ENCODE measurements at regions of chr10 and their contacts with region 1.

Region 1: DNA sequence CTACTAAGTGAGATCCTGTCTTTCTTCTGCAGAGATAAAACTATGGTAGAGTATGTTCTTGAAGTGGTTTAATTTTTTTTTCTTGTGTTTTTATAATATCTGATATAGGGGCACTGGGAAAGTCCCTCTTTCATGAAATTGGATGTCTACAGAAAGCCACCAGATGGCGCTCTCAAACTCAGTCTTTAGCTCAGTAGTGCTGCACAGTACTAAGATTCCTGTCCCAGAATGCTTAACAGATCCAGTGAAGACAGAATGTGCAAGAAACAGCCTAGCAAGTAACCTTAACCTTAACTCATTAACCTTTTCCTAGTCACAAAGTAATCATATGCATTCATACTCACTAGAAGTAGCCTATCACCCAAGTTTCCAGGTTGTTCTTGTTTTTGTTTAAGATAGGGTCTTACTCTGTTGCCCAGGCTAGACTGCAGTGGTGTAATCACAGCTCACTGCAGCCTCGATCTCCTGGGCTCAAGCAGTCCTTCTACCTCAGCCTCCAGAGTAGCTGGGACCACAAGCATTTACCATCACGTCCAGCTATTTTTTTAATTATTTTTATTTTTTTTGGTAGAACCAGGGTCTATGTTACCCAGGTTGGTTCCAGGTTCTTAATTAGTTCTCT is 56.7 kb downstream of the IDE start:
- DNase-seq: peak; percentile 80
- H3K4me3 ChIP-seq: no peak overlapping the region
- H3K27ac ChIP-seq: no peak overlapping the region
- H3K4me1 ChIP-seq: no peaks in the 10 kb centered on the region
- H3K27me3 ChIP-seq: no peaks in the 10 kb centered on the region
- CTCF ChIP-seq: peak; percentile 67 to 73
- POLR2A ChIP-seq: no peak

Region 2: DNA sequence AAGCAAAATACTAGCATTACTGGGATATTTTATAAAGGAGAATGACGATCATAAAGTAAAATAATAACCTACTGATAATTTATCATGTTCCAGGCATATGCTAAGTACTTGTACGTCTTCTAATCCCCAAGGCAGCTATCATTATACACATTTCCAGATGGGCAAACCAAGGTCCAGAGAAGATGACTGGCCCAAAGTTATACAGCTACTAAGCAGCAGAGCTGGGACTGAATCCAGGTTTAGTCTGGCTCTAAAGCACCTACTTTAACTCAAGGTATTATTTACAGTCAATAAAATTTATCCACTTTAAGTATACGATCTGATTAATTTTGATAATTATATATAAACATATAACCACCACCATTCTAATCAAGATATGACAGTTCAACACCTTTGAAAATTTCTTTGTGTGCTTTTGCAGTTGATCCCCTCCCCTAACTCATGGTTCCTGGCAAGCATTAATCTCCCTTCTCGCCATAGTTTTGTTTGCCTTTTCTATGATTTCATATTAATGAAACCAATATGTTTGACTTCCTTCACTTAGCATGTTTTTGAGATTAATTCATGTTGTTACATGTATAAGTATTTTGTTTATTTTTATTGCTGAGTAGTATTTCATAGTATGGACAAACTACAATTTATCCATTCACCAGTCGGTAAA is 353.0 kb before region 1 on chr10:
- CTCF ChIA-PET with region 1: no interaction called
- POLR2A ChIA-PET with region 1: no interaction called
- dilution Hi-C with region 1: no loop called
- intact Hi-C with region 1: no loop called
- DNase-seq: no peak
- H3K4me3 ChIP-seq: no peak overlapping the region
- H3K27ac ChIP-seq: no peak overlapping the region
- H3K4me1 ChIP-seq: no peaks in the 10 kb centered on the region
- H3K27me3 ChIP-seq: no peaks in the 10 kb centered on the region
- CTCF ChIP-seq: no peak
- POLR2A ChIP-seq: no peak

Region 3: DNA sequence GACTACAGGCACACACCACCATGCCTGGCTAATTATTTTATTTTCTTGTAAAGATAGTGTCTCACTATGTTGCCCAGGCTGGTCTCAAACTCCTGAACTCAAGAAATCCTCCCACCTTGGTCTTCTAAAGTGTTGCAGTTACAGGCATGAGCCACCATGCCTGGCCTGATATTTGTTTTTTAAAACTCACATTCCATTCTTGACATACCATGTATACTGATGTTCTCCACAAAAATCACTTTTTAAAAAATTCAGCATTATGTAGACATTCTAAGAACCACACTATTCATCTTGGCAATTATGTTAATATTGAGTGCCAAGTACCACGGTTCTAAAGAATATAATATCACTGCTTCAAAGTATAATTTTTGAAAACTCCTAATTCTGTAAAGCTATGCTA is 13.3 kb after region 1 on chr10:
- CTCF ChIA-PET with region 1: interaction called, 49 read pairs
- POLR2A ChIA-PET with region 1: no interaction called
- dilution Hi-C with region 1: no loop called
- intact Hi-C with region 1: no loop called
- DNase-seq: no peak
- H3K4me3 ChIP-seq: no peak overlapping the region
- H3K27ac ChIP-seq: no peak overlapping the region
- H3K4me1 ChIP-seq: no peaks in the 10 kb centered on the region
- H3K27me3 ChIP-seq: no peaks in the 10 kb centered on the region
- CTCF ChIP-seq: no peak
- POLR2A ChIP-seq: no peak

Region 4: DNA sequence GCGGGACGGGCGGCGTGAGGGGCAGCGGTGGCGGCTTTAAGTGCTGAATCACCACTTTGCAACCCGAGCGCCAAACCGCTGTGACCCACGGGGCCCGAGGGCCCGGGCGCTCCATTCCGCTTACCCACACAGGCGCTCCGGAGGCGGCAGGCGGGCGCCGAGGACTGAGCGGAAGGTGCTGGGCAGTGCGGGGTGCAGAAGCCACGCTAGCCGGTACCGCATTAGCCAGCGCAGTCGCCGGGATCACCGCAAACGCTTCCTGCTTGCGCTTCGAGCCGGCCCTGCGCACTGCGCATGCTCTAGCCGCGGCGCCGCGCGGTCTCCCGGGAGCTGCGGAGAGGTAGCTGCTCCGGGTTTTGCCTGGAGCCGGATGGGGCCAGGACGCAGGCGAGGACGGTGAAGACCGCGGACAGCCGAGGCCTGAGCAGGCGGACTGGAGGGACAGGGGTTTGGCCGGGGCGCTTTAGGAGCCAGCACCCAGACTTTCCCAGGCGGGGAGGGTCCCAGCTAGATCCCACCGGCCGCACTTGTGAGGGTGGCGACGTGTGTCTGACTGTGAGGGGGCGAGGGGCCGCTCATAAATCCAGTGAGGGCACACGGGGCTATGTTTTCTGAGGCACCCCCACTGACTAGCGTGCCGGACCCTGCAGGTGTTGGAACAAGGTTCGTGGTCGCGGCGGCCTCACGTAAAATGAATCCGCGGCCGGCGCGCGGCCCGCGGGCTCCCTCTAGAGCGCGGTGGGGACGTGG is 56.8 kb after region 1 on chr10 and contains the start of gene IDE:
- CTCF ChIA-PET with region 1: interaction called, 182 read pairs
- POLR2A ChIA-PET with region 1: interaction called, 3 read pairs
- dilution Hi-C with region 1: no loop called
- intact Hi-C with region 1: loop called (anchors 1 kb)
- DNase-seq: peak; percentile 92
- H3K4me3 ChIP-seq: peak within 1 kb of the TSS; percentile 63 to 84 (median 68)
- H3K27ac ChIP-seq: peak within 1 kb of the TSS; percentile 89
- H3K4me1 ChIP-seq: peaks cover 18% of the 10 kb centered on the region
- H3K27me3 ChIP-seq: no peaks in the 10 kb centered on the region
- CTCF ChIP-seq: peak; percentile 83 to 87
- POLR2A ChIP-seq: peak; percentile 84
- total RNA-seq, gene IDE: 52.6 and 53.5 TPM in 2 replicates

Region 5: DNA sequence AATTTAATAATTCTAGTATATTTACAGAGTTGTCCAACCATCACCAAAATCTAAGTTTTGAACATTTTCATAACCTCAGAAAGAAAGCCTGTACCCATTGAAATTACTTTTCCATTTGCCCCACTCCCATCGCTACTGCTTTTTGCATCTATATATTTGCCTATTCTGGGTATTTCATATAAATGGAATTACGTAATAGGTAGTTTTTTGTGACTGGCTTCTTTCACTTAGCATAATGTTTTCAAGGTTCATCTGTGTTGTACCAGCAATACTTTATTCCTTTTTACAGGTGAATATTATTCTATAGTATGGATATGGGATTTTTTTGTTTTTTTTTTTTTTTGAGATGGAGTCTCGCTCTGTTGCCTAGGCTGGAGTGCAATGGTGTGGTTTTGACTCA is 98.4 kb after region 1 on chr10:
- CTCF ChIA-PET with region 1: interaction called, 10 read pairs
- POLR2A ChIA-PET with region 1: no interaction called
- dilution Hi-C with region 1: no loop called
- intact Hi-C with region 1: no loop called
- DNase-seq: no peak
- H3K4me3 ChIP-seq: no peak overlapping the region
- H3K27ac ChIP-seq: no peak overlapping the region
- H3K4me1 ChIP-seq: no peaks in the 10 kb centered on the region
- H3K27me3 ChIP-seq: no peaks in the 10 kb centered on the region
- CTCF ChIP-seq: no peak
- POLR2A ChIP-seq: no peak

Region 6: GRCh38 chr10:92822060-92822634 is 305.0 kb after region 1 on chr10:
- CTCF ChIA-PET with region 1: interaction called, 14 read pairs
- POLR2A ChIA-PET with region 1: no interaction called
- dilution Hi-C with region 1: no loop called
- intact Hi-C with region 1: loop called (anchors 2 kb)
- DNase-seq: peak; percentile 97
- H3K4me3 ChIP-seq: no peak overlapping the region
- H3K27ac ChIP-seq: peak overlapping the region; percentile 97
- H3K4me1 ChIP-seq: peaks cover 55% of the 10 kb centered on the region
- H3K27me3 ChIP-seq: no peaks in the 10 kb centered on the region
- CTCF ChIP-seq: no peak
- POLR2A ChIP-seq: peak; percentile 60

Region 7: GRCh38 chr10:92990615-92991014 is 473.5 kb after region 1 on chr10:
- CTCF ChIA-PET with region 1: no interaction called
- POLR2A ChIA-PET with region 1: no interaction called
- dilution Hi-C with region 1: no loop called
- intact Hi-C with region 1: no loop called
- DNase-seq: peak; percentile 36
- H3K4me3 ChIP-seq: no peak overlapping the region
- H3K27ac ChIP-seq: no peak overlapping the region
- H3K4me1 ChIP-seq: no peaks in the 10 kb centered on the region
- H3K27me3 ChIP-seq: no peaks in the 10 kb centered on the region
- CTCF ChIP-seq: no peak
- POLR2A ChIP-seq: no peak

Measured in endothelial cell of umbilical vein (primary cell).